Dendritic cell treated with granulocyte-macrophage colony-stimulating factor and Interleukin-4, amounts not matched to agents 40 ng/mL and 50 ng/mL, for 4 days (primary cell): ENCODE measurements at regions of chr3 and their contacts with region 1.

Region 1: GRCh38 chr3:185824476-185825378 is at the start of gene IGF2BP2:
- H3K4me3 Mint-ChIP-seq: peak within 1 kb of the TSS; percentile 94
- H3K27ac Mint-ChIP-seq: peak within 1 kb of the TSS; percentile 79
- H3K4me1 Mint-ChIP-seq: peaks cover 22% of the 10 kb centered on the region
- H3K27me3 Mint-ChIP-seq: peaks cover 14% of the 10 kb centered on the region

Region 2: GRCh38 chr3:185900226-185900625 is 75.5 kb after region 1 on chr3:
- intact Hi-C with region 1: no loop called
- H3K4me3 Mint-ChIP-seq: no peak overlapping the region
- H3K27ac Mint-ChIP-seq: no peak overlapping the region
- H3K4me1 Mint-ChIP-seq: peaks cover 22% of the 10 kb centered on the region
- H3K27me3 Mint-ChIP-seq: peaks cover 1% of the 10 kb centered on the region

Region 3: DNA sequence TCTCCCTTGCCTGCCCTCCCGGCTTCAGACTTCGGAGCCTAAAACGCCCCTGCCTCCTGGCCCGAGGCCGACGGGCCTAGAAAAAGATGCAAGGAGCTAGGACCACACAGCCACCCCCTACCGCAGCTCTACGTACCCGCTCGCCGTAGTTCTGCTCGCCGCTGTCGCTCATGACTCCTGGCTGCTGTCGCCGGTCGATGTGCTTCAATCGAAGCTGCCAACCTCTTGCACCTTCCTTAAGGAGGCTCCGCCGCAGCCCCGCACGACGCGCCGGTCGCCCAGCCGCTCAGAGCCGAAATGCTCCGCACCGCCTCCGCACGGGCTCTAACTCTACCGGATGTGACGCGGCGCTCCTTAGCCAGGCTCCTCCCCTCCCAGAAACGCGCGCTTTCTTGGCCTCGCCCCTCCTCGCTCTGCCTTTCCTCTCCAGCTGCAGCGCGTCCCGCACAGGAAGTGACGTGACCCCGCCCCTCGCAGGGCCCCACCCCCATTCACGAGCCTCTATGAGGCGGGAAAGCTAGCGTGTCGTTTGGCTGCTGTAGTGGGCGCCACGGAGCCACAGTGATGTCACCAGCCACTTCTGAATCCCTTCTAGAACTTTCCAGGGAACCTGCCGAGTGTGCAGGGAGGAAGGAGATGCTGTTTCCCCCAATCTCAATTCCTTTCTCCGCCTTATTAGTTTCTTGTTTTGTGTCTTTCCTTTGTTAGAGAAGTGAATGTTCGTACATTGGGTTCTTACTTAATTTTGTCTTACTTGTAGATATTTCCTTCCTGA is 113.1 kb after region 1 on chr3 and contains the start of gene TRA2B:
- intact Hi-C with region 1: loop called (anchors 10 kb)
- H3K4me3 Mint-ChIP-seq: peak within 1 kb of the TSS; percentile 97
- H3K27ac Mint-ChIP-seq: peak within 1 kb of the TSS; percentile 99
- H3K4me1 Mint-ChIP-seq: peaks cover 40% of the 10 kb centered on the region
- H3K27me3 Mint-ChIP-seq: no peaks in the 10 kb centered on the region